Cardiac septum (tissue), 1 donor: ENCODE measurements at regions of chr3 and their contacts with region 1.

Region 1: GRCh38 chr3:197002701-197003454 is 26.7 kb downstream of the MELTF start:
- DNase-seq: peak; percentile 87

Region 2: DNA sequence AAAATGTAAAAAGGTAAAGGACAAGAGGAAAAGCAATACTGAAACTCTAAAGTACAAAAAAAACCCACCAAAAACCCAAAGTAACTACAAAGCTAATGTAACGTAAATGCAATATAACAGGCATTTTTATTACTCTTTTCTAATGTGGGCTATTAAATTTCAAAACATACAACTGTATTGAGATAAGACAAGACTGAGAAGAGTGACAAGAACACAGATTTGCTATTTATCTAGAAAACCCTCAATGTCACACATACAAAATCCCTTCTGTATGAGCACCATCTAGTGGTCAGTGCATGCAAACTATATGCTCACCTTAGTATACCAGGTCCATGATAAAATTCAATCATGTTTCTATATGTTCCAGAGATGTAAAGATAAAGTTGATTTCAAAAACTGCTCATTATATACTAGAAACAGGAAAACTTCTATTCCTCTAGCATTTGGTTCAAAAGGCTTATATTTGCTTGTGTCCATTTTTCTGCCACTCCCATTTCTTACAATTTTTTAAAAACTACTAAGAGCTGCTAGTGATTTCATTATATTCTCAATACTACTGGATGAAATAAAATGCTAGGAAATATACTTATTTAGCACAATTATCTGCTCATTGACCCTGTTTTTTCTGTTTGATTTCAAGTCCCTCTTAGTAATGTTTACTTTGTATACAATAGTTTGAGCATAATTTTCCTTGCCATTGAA is 184.2 kb after region 1 on chr3:
- intact Hi-C with region 1: loop called (anchors 2 kb)
- DNase-seq: no peak

Region 3: GRCh38 chr3:197504239-197505121 is 501.6 kb after region 1 on chr3:
- intact Hi-C with region 1: loop called (anchors 5 kb)
- DNase-seq: no peak